Activated CD4-positive, alpha-beta T cell treated with anti-CD3 and anti-CD28 coated beads for 36 hours (primary cell): ENCODE measurements at regions of chr16 and their contacts with region 1.

Region 1: DNA sequence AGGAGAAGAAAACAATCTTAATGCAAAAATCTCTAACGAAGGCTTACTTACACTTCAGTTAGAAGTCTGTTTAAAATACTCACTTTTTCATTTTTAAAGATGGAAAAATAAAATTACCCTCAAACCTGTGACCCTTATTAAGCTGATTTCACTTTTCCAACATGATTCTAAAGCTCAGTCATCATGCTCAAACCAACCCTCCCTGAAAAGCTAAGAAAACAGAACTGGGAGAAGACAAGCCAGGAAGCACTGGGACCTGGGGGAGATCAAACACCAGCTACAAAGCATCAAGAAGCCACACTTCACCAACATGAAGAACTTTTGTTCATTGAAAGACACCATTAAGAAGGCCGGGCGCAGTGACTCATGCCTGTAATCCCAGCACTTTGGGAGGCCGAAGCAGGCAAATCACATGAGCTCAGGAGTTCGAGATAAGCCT is 88.8 kb downstream of the LITAF start:
- DNase-seq: no peak
- ATAC-seq: no peak
- H3K4me3 Mint-ChIP-seq: no peak overlapping the region
- H3K27ac Mint-ChIP-seq: peak overlapping the region; percentile 60
- H3K4me1 Mint-ChIP-seq: peaks cover 38% of the 10 kb centered on the region
- H3K27me3 Mint-ChIP-seq: no peaks in the 10 kb centered on the region

Region 2: DNA sequence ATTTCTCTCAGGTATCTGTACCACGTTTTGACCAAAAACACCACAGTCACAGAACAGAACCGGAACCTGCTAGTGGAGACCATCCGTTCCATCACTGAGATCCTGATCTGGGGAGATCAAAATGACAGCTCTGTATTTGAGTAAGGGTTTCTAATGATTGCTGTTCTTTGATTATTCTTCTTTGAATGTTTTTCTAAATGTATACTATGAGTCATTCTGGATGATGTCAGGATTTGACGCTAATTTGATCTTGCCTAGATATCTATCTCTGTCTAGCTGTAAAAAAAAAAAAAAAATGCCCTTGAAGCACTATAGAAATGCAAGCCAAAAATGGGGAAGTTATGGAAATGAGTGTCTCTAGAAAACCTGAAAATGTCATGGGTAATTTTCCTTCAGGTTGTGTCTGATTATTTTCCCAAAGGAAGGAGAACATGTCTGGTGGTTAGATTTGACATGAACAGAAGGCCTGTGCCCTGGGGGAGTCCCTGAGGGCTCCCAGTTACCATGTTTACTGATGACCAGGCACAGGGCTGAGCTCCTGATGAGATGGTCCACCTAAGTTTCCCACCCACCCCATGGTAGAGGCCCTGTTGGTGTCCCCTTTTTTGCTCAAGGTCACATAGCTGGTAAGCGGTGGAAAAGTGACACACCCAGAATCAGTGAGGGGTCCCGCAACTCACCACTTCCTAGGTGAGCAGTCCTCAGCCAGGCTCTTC is 539.9 kb before region 1 on chr16:
- CTCF ChIA-PET with region 1: no interaction called
- POLR2A ChIA-PET with region 1: no interaction called
- intact Hi-C with region 1: loop called (anchors 10 kb)
- DNase-seq: peak; percentile 51
- ATAC-seq: peak; percentile 82
- H3K4me3 Mint-ChIP-seq: no peak overlapping the region
- H3K27ac Mint-ChIP-seq: peak overlapping the region; percentile 88
- H3K4me1 Mint-ChIP-seq: peaks cover 68% of the 10 kb centered on the region
- H3K27me3 Mint-ChIP-seq: no peaks in the 10 kb centered on the region